Activated CD4-positive, alpha-beta memory T cell treated with anti-CD3 and anti-CD28 coated beads for 36 hours (primary cell): ENCODE measurements at regions of chr15 and their contacts with region 1.

Region 1: DNA sequence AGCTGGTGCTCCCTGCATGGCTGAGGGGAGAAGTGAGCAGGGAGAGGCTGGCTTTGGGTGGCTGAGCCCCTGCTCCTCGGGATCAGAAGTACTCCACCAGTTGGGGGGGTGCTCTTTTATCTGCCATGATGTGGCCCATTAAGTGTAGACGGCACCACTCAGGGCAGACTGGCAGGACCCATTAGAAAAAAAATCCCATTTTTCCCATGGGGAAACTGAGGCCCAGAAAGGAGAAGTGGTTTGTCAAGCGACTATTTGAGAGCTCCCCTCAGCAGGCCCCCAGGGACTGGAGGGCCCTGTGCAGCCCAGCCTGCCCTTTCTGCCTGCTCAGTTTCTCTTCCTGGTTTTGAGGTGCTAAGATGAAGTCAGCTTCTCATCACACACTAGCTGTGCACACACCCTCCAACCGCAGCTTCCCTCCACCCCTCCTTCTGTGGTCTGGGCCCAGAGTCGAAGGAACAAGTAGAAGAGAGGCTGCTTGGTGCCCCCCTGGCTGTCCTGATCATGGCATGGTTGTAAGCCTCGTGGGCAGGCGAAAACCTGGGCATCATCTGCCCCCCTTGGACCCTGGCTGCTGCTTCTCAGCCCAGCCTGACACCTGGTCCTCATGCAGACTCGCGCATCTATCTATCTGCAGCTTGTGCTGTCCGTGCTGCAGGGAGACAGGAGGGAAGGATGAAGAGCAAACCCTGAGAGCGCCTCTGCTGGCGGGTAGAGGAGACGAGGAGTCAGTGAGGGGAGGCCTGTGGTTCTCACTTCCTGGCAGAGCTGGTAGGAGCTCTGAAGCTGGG is 5.6 kb downstream of the CSK start:
- DNase-seq: peak; percentile 97
- H3K4me3 Mint-ChIP-seq: peak overlapping the region; percentile 90
- H3K27ac Mint-ChIP-seq: peak overlapping the region; percentile 99
- H3K4me1 Mint-ChIP-seq: peaks cover 53% of the 10 kb centered on the region
- H3K27me3 Mint-ChIP-seq: no peaks in the 10 kb centered on the region

Region 2: DNA sequence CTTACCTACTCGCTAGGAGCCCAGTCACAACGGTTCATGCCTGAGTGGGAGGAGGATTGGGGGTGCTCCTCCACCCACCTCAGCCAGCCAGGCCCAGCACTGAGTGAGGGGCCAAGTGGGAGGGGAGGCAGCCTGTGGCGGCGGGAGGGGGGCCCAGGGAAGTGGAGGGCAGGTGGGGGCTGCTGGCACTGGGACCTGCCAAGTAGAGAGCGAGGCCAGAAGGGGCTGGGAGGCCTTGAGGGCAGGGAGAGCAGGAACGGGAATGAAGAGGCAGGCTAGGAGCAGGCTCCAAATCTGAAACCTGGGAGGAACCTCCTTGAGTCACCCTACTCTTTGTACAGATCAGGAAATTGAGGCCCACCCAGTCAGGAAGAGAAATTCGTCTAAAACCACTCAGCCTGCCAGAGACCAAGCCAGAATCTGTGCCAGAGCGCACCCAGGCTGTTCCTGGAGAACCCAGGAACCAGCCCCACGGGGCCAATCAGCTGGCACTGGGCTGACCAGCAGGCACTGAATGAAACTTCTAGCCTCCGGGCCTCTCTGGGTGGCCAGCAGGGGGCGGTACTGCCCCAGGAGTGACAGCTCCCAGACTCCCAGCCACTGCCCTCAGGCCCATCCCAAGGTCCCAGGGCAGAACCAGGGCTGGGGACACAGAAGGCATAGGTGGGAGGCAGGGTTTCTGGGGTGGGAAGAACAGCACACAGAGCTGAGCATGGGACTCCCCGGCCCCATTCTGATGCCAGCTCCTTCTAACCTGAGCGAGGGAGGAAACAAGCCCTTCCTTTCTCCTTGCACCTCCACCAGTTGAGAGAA is 405.2 kb before region 1 on chr15:
- CTCF ChIA-PET with region 1: no interaction called
- POLR2A ChIA-PET with region 1: no interaction called
- intact Hi-C with region 1: loop called (anchors 5 kb)
- DNase-seq: peak; percentile 86
- H3K4me3 Mint-ChIP-seq: no peak overlapping the region
- H3K27ac Mint-ChIP-seq: peak overlapping the region; percentile 94
- H3K4me1 Mint-ChIP-seq: peaks cover 79% of the 10 kb centered on the region
- H3K27me3 Mint-ChIP-seq: no peaks in the 10 kb centered on the region

Region 3: GRCh38 chr15:74511583-74511982 is 275.9 kb before region 1 on chr15:
- CTCF ChIA-PET with region 1: no interaction called
- POLR2A ChIA-PET with region 1: no interaction called
- intact Hi-C with region 1: no loop called
- DNase-seq: no peak
- H3K4me3 Mint-ChIP-seq: no peak overlapping the region
- H3K27ac Mint-ChIP-seq: no peak overlapping the region
- H3K4me1 Mint-ChIP-seq: peaks cover 8% of the 10 kb centered on the region
- H3K27me3 Mint-ChIP-seq: no peaks in the 10 kb centered on the region

Region 4: DNA sequence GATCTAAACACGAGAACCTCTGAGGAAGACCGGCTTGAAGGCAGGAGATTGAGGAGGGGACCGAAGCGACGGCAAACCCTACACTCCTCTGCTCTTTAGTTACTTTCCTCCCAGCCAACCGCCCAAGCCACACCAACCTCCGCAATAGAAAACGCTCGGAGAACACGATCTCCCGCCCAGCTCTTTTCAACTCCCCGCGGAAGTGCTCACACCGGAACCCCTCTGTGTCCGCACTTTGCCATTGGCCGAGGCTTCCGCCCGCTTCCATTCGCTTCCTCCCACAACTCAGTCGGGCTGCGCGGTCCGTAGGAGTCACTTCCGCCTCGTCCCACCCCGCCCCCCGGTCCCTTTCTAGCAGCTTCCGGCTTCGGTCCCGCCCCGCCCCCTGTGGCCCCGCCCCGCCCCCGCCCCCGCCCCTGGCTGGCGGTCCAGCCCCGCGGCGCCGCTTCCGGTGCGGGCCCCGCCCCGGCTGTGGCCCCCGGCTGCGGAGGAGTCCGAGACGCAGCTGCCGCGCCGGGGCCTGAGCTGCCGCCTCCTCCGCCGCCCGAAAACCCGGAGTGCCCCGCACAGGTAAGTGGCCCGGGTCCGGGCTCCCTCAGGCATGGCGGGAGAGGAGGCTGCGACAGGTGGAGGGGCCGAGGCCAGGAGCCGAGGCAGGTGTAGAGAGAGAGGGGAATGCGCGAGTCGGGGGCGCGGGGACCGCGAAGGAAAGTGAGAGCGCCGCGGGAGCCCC is 246.5 kb before region 1 on chr15 and contains the start of gene ARID3B:
- CTCF ChIA-PET with region 1: interaction called, 7 read pairs
- POLR2A ChIA-PET with region 1: no interaction called
- intact Hi-C with region 1: loop called (anchors 5 kb)
- DNase-seq: peak; percentile 99
- H3K4me3 Mint-ChIP-seq: peak within 1 kb of the TSS; percentile 99
- H3K27ac Mint-ChIP-seq: peak within 1 kb of the TSS; percentile 95
- H3K4me1 Mint-ChIP-seq: peaks cover 48% of the 10 kb centered on the region
- H3K27me3 Mint-ChIP-seq: no peaks in the 10 kb centered on the region
- total RNA-seq, gene ARID3B: 27.3 to 28.6 TPM

Region 5: GRCh38 chr15:74842581-74843444 is 55.4 kb after region 1 on chr15 and contains the start of gene ULK3:
- CTCF ChIA-PET with region 1: interaction called, 11 read pairs
- POLR2A ChIA-PET with region 1: interaction called, 5 read pairs
- intact Hi-C with region 1: loop called (anchors 5 kb)
- DNase-seq: peak; percentile 95
- H3K4me3 Mint-ChIP-seq: peak within 1 kb of the TSS; percentile 92
- H3K27ac Mint-ChIP-seq: peak within 1 kb of the TSS; percentile 93
- H3K4me1 Mint-ChIP-seq: peaks cover 44% of the 10 kb centered on the region
- H3K27me3 Mint-ChIP-seq: no peaks in the 10 kb centered on the region
- total RNA-seq, gene ULK3: 51.4 to 57.6 TPM

Region 6: GRCh38 chr15:74889883-74890664 is 102.6 kb after region 1 on chr15 and contains the start of gene MPI:
- CTCF ChIA-PET with region 1: interaction called, 5 read pairs
- POLR2A ChIA-PET with region 1: no interaction called
- intact Hi-C with region 1: loop called (anchors 5 kb)
- DNase-seq: peak; percentile 93
- H3K4me3 Mint-ChIP-seq: peak within 1 kb of the TSS; percentile 90
- H3K27ac Mint-ChIP-seq: peak within 1 kb of the TSS; percentile 76
- H3K4me1 Mint-ChIP-seq: peaks cover 44% of the 10 kb centered on the region
- H3K27me3 Mint-ChIP-seq: no peaks in the 10 kb centered on the region
- total RNA-seq, gene MPI: 56.4 to 60.0 TPM